Activated B cell treated with CpG ODN at 0.5 μM for 24 hours (primary cell): ENCODE measurements at regions of chr4 and their contacts with region 1.

Region 1: DNA sequence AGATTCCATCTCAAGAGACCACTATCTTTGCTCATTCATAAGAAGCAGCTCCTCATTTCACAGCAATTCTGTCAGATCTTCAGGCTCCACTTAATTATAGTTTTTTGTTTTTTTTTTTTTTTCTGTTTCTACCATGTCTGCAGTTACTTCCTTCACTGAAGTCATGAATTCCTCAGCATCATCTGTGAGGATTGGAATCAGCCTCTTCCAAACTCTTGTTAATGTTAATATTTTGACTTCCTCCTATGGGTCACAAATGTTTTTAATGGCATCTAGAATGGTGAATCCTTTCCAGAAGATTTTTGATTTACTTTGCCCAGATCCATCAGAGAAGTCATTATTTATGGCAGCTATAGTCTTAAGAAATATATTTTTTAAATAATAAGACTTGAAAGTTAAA is 53.1 kb downstream of the BMP2K start:
- DNase-seq: no peak
- ATAC-seq: no peak
- H3K4me3 Mint-ChIP-seq: no peak overlapping the region
- H3K27ac Mint-ChIP-seq: no peak overlapping the region
- H3K4me1 Mint-ChIP-seq: peaks cover 17% of the 10 kb centered on the region
- H3K27me3 Mint-ChIP-seq: no peaks in the 10 kb centered on the region
- CTCF ChIP-seq: no peak

Region 2: DNA sequence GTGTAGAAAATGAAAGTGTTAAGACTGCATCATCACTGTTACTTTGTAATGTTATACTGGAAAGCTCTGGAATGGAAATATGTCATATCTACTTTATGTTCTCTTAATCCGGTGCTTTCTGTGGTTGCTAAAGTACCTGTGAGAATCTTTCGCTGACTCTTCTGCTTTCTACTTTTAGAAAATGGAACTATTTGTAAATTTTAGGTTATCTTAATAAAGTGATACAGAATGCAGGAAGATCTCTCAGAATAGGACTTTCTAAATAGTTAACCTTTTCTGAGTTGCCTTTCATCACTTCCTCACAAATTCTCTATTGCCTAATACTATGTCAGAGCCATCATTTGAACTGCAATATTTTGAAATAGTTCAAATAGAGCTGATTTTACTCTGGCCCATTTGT is 16.2 kb after region 1 on chr4:
- CTCF ChIA-PET with region 1: no interaction called
- POLR2A ChIA-PET with region 1: no interaction called
- intact Hi-C with region 1: loop called (anchors 2 kb)
- DNase-seq: no peak
- ATAC-seq: peak; percentile 28
- H3K4me3 Mint-ChIP-seq: peak overlapping the region; percentile 38
- H3K27ac Mint-ChIP-seq: peak overlapping the region; percentile 50
- H3K4me1 Mint-ChIP-seq: peaks cover 40% of the 10 kb centered on the region
- H3K27me3 Mint-ChIP-seq: no peaks in the 10 kb centered on the region
- CTCF ChIP-seq: no peak